ENCODE measurements at regions of chr16 and their contacts with region 1.

Region 1: DNA sequence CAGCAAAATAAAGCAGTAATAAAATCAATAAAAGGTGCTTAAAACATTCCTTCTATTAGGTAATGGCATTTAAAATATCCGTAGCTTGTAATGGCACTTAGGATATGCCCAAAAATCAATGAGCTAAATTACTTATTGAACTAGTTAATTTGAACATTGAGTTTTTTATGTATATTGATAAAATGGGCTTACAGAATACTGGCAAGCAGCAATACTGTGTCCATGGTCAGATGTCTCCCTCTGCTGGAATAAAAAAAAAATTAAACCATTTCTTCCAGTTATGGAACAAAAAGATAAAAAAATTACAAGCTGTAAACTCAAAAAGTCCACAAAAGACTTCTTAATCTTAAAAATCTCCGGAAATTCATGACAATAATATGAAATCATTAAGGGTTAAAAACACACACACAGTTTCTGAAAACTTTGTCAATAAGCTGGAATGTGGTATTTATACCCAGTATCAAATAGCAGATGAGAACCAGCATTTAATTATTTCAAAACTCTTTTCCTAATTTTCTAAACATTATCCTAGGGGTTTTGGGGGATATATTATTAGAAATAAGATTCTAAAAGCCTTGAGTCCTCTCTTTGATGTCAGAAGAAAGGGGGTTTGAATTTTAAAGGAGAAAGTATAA is 21.5 kb upstream of the PSMD7 start:
- DNase-seq: peak in 1 of 2 experiments; percentile 20
- H3K4me3 ChIP-seq: no peak overlapping the region
- H3K4me3 Mint-ChIP-seq: no peak overlapping the region
- H3K27ac Mint-ChIP-seq: no peak overlapping the region
- H3K4me1 ChIP-seq: peaks cover 6% of the 10 kb centered on the region
- H3K4me1 Mint-ChIP-seq: no peaks in the 10 kb centered on the region
- H3K27me3 ChIP-seq: no peaks in the 10 kb centered on the region
- H3K27me3 Mint-ChIP-seq: peaks cover 16% of the 10 kb centered on the region
- CTCF ChIP-seq: peak; percentile 59 to 65

Region 2: DNA sequence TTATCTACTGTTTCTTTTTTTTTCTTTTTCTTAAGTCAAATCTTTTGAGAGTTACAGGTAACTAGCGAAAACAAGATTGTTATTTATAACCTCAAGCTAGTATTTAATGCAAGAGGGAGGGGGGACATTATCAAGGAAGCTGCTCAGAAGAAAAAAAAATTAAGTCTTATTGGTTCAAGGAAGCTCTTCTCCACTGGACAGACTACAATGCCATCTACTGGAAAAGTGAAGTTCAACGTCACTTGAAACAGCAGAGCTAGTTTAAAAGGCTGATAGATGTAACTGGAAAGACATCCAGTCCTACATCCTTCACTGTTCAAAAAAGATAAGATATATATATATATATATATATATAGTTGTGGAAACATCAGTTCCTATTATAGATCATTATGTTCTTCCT is 396.5 kb before region 1 on chr16:
- CTCF ChIA-PET with region 1: no interaction called
- POLR2A ChIA-PET with region 1: no interaction called
- intact Hi-C with region 1: loop called (anchors 1 kb)
- DNase-seq: peak in 1 of 2 experiments; percentile 50
- H3K4me3 ChIP-seq: no peak overlapping the region
- H3K4me3 Mint-ChIP-seq: no peak overlapping the region
- H3K27ac Mint-ChIP-seq: no peak overlapping the region
- H3K4me1 ChIP-seq: no peaks in the 10 kb centered on the region
- H3K4me1 Mint-ChIP-seq: no peaks in the 10 kb centered on the region
- H3K27me3 ChIP-seq: no peaks in the 10 kb centered on the region
- H3K27me3 Mint-ChIP-seq: peaks cover 15% of the 10 kb centered on the region
- CTCF ChIP-seq: peak; percentile 49 to 74

Region 3: GRCh38 chr16:73956587-73957494 is 318.3 kb before region 1 on chr16:
- CTCF ChIA-PET with region 1: no interaction called
- POLR2A ChIA-PET with region 1: no interaction called
- intact Hi-C with region 1: loop called (anchors 2 kb)
- DNase-seq: peak; percentile 52 to 64
- H3K4me3 ChIP-seq: no peak overlapping the region
- H3K4me3 Mint-ChIP-seq: no peak overlapping the region
- H3K27ac Mint-ChIP-seq: no peak overlapping the region
- H3K4me1 ChIP-seq: no peaks in the 10 kb centered on the region
- H3K4me1 Mint-ChIP-seq: no peaks in the 10 kb centered on the region
- H3K27me3 ChIP-seq: no peaks in the 10 kb centered on the region
- H3K27me3 Mint-ChIP-seq: peaks cover 6% of the 10 kb centered on the region
- CTCF ChIP-seq: peak; percentile 83 to 96

Region 4: GRCh38 chr16:74034862-74035261 is 240.3 kb before region 1 on chr16:
- CTCF ChIA-PET with region 1: interaction called, 4 read pairs
- POLR2A ChIA-PET with region 1: no interaction called
- intact Hi-C with region 1: loop called (anchors 5 kb)
- DNase-seq: peak in 1 of 2 experiments; percentile 36
- H3K4me3 ChIP-seq: no peak overlapping the region
- H3K4me3 Mint-ChIP-seq: no peak overlapping the region
- H3K27ac Mint-ChIP-seq: no peak overlapping the region
- H3K4me1 ChIP-seq: no peaks in the 10 kb centered on the region
- H3K4me1 Mint-ChIP-seq: no peaks in the 10 kb centered on the region
- H3K27me3 ChIP-seq: 0 out of 2 replicates have a peak, but pooled peaks cover 2% of the 10 kb centered on the region
- H3K27me3 Mint-ChIP-seq: peaks cover 21% of the 10 kb centered on the region
- CTCF ChIP-seq: peak; percentile 49 to 57

Region 5: GRCh38 chr16:74064120-74064735 is 210.9 kb before region 1 on chr16:
- CTCF ChIA-PET with region 1: interaction called, 4 read pairs
- POLR2A ChIA-PET with region 1: no interaction called
- intact Hi-C with region 1: loop called (anchors 1 kb)
- DNase-seq: no peak
- H3K4me3 ChIP-seq: no peak overlapping the region
- H3K4me3 Mint-ChIP-seq: no peak overlapping the region
- H3K27ac Mint-ChIP-seq: no peak overlapping the region
- H3K4me1 ChIP-seq: no peaks in the 10 kb centered on the region
- H3K4me1 Mint-ChIP-seq: no peaks in the 10 kb centered on the region
- H3K27me3 ChIP-seq: no peaks in the 10 kb centered on the region
- H3K27me3 Mint-ChIP-seq: peaks cover 33% of the 10 kb centered on the region
- CTCF ChIP-seq: no peak

Region 6: GRCh38 chr16:74107795-74108618 is 167.1 kb before region 1 on chr16:
- CTCF ChIA-PET with region 1: interaction called, 4 read pairs
- POLR2A ChIA-PET with region 1: no interaction called
- intact Hi-C with region 1: loop called (anchors 10 kb)
- DNase-seq: peak; percentile 56 to 76
- H3K4me3 ChIP-seq: no peak overlapping the region
- H3K4me3 Mint-ChIP-seq: peak overlapping the region; percentile 16
- H3K27ac Mint-ChIP-seq: no peak overlapping the region
- H3K4me1 ChIP-seq: no peaks in the 10 kb centered on the region
- H3K4me1 Mint-ChIP-seq: no peaks in the 10 kb centered on the region
- H3K27me3 ChIP-seq: no peaks in the 10 kb centered on the region
- H3K27me3 Mint-ChIP-seq: peaks cover 7% of the 10 kb centered on the region
- CTCF ChIP-seq: peak; percentile 78 to 86

Region 7: GRCh38 chr16:74226338-74226954 is 48.7 kb before region 1 on chr16:
- CTCF ChIA-PET with region 1: interaction called, 4 read pairs
- POLR2A ChIA-PET with region 1: no interaction called
- intact Hi-C with region 1: loop called (anchors 2 kb)
- DNase-seq: no peak
- H3K4me3 ChIP-seq: no peak overlapping the region
- H3K4me3 Mint-ChIP-seq: no peak overlapping the region
- H3K27ac Mint-ChIP-seq: no peak overlapping the region
- H3K4me1 ChIP-seq: no peaks in the 10 kb centered on the region
- H3K4me1 Mint-ChIP-seq: no peaks in the 10 kb centered on the region
- H3K27me3 ChIP-seq: peaks cover 1% of the 10 kb centered on the region; the same call in 1 of the 2 replicates
- H3K27me3 Mint-ChIP-seq: peaks cover 21% of the 10 kb centered on the region
- CTCF ChIP-seq: peak; percentile 55 to 58

Region 8: DNA sequence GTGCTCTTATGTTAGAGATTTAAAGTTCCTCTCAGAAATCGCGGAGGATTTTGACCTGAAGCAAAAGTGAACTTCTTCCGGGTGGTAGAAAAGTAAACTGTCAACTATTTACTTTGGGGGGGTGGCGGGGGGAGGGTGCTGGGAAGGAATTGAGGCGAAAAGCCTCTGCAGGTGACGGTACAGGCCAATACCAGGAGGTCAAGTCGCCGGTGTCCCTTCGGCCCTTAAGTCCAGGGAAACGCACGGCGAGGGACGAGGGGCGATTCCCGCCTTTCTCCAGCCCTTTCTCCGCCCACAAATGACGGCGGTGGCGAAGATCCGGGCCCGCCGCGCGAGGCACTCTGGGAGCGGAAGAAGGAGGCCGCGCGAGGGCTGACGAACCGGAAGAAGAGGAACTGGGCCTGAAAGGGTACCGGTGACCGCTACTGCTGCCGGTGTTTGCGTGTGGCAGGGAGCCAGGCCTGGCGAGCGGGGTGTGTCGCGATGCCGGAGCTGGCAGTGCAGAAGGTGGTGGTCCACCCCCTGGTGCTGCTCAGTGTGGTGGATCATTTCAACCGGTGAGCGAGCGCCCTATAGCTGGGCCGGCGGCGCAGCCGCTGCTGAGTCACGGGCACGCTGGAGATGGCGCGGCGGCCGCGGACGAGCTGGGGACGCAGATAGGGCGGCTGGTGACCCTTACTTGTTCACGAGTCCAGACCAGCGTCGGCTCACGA is 21.5 kb after region 1 on chr16 and contains the start of gene PSMD7:
- CTCF ChIA-PET with region 1: no interaction called
- POLR2A ChIA-PET with region 1: no interaction called
- intact Hi-C with region 1: no loop called
- DNase-seq: peak; percentile 96 to 97
- H3K4me3 ChIP-seq: peak within 1 kb of the TSS; percentile 86
- H3K4me3 Mint-ChIP-seq: peak within 1 kb of the TSS; percentile 87
- H3K27ac Mint-ChIP-seq: peak within 1 kb of the TSS; percentile 93
- H3K4me1 ChIP-seq: peaks cover 10% of the 10 kb centered on the region
- H3K4me1 Mint-ChIP-seq: peaks cover 10% of the 10 kb centered on the region
- H3K27me3 ChIP-seq: no peaks in the 10 kb centered on the region
- H3K27me3 Mint-ChIP-seq: no peaks in the 10 kb centered on the region
- CTCF ChIP-seq: no peak
- total RNA-seq, gene PSMD7: 182 and 191 TPM in 2 replicates